Naive thymus-derived CD8-positive, alpha-beta T cell (primary cell): ENCODE measurements at regions of chr17 and their contacts with region 1.

Region 1: DNA sequence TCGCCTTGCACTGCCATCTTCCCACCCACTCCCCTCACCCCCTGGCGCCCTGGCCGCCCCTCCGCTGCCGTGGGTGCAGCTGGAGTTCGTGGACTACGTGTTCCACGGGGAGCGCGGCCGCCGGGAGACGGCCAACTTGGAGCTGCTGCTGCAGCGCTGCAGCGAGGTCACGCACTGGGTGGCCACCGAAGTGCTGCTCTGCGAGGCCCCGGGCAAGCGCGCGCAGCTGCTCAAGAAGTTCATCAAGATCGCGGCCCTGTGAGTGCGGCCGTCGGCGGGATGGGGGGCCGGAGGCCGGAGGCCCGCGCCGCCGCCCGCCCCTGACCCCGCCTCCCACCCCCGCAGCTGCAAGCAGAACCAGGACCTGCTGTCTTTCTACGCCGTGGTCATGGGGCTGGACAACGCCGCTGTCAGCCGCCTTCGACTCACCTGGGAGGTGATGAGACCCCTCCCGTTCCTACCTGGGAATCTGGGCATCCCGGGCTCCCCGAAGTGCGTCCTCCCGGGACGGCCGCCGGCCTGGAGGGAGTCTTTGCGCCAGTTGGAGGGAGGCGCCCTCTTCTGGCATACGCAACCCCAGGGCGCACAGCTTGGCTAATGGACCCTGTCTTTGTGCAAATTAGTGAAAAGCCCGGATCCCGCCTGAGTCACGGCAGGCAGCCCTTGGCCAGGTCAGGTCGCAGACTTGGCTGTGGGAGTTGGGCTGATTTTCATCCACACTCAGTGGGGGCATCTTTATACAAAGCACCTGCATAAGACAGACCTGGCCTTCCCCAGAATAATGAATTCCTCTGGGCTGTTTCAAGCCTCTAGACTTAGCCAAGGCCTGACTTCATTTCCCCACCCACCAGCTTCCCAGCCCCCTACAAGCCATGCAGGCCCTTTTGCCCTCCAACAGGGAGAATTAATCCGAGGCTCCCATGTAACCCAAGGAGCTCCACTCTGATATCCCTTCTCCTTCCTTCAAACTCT is 14.3 kb downstream of the RAPGEFL1 start:
- DNase-seq: peak; percentile 37 to 76 (median 54)
- ATAC-seq: peak; percentile 78 to 85
- H3K4me3 Mint-ChIP-seq: peak overlapping the region; percentile 89 to 98 (median 94)
- H3K27ac Mint-ChIP-seq: peak overlapping the region in 6 of 10 donors; percentile 17 to 81 (median 66)
- H3K4me1 Mint-ChIP-seq: peaks cover 8 to 14% (median 12%) of the 10 kb centered on the region in 4 donors
- H3K27me3 Mint-ChIP-seq: no peaks in the 10 kb centered on the region

Region 2: DNA sequence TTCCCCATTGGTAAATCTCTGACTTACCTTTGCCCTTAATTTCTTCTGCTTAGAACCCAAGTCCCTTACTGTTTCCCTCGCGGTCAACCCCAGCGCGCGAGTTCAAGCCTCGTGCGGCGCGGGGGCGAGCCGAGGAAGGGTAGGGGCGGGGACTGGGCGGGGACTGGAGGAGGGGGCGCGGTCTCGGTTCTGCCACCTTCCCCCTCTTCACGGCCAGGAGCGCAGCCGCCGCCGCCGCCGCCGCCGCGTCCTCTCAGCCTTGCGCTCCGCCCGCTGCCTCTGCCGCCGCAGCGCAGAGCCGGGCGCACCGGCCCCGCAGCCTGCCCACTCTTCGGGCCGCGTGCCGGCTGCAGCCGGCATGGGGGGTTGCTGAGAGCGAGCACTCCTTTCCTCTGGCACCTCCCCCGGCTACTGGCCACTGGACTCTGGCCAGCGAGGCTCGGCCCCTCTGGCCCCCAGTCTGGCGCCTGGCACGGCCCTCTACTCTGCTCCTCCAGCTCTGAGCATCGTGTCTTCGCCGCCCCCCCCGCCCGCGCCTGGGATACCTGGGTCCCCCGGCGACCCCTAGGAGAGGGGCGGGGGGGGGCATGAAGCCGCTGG is 14.1 kb before region 1 on chr17 and contains the start of gene RAPGEFL1:
- POLR2A ChIA-PET with region 1: interaction called, 11 read pairs
- DNase-seq: peak; percentile 60 to 88 (median 72)
- ATAC-seq: peak; percentile 95 to 98
- H3K4me3 Mint-ChIP-seq: peak within 1 kb of the TSS; percentile 54 to 77 (median 68)
- H3K27ac Mint-ChIP-seq: peak within 1 kb of the TSS in 7 of 10 donors; percentile 48 to 87 (median 73)
- H3K4me1 Mint-ChIP-seq: peaks cover 9 to 16% (median 12%) of the 10 kb centered on the region in 4 donors
- H3K27me3 Mint-ChIP-seq: no peaks in the 10 kb centered on the region
- polyA plus RNA-seq, gene RAPGEFL1: 0.12 to 0.65 TPM in 2 of 3 donors, not detected in the other